B cell (primary cell): ENCODE measurements at regions of chr19 and their contacts with region 1.

Region 1: DNA sequence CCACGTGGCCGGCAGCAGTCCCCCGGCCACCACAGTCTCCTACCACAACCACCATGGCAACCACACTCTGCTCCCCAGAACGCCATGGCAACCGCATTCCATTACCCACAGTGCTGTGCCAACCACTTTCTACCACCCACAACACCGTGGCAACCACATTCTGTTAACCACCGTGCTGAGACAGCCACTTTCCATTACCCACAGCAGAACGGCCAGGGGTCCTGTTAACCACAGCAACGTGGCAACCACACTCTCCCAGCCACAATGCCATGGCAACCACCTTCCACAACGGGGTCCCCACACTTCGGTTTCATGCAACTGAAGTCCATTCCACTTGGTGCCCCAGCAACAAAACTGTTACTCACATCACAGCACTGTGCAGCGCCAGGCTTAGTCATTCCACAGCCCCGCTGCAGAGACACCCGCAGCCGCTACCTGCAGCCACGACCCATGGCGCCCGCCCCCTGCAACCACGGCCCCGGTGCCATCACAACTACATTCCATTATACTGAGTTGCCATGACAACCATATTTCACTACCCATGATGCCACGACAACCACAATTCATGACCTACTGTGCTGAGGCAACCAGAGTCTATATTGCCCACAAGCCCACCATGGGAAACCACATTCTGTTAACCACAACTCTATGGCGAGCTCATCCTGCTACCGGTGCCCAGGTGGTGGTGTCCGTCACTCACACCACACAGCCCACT is 10.0 kb downstream of the DPF1 start:
- DNase-seq: peak; percentile 63
- ATAC-seq: peak; percentile 45
- H3K4me3 ChIP-seq: no peak overlapping the region
- H3K4me3 Mint-ChIP-seq: peak overlapping the region; percentile 38
- H3K27ac ChIP-seq: no peak overlapping the region
- H3K27ac Mint-ChIP-seq: peak overlapping the region; percentile 50
- H3K4me1 ChIP-seq: peaks cover 26 to 29% of the 10 kb centered on the region in 2 donors
- H3K4me1 Mint-ChIP-seq: peaks cover 31% of the 10 kb centered on the region
- H3K27me3 ChIP-seq: peaks cover 0 to 58% (median 16%) of the 10 kb centered on the region in 4 experiments
- H3K27me3 Mint-ChIP-seq: peaks cover 32% of the 10 kb centered on the region
- CTCF ChIP-seq: no peak

Region 2: GRCh38 chr19:39824143-39825092 is 1610.3 kb after region 1 on chr19:
- CTCF ChIA-PET with region 1: no interaction called
- POLR2A ChIA-PET with region 1: interaction called, 16 read pairs
- intact Hi-C with region 1: no loop called
- DNase-seq: peak; percentile 92
- ATAC-seq: peak; percentile 98
- H3K4me3 ChIP-seq: peak overlapping the region; percentile 66 to 85 (median 79)
- H3K4me3 Mint-ChIP-seq: no peak overlapping the region
- H3K27ac ChIP-seq: peak overlapping the region; percentile 38 to 55
- H3K27ac Mint-ChIP-seq: no peak overlapping the region
- H3K4me1 ChIP-seq: peaks cover 18 to 30% of the 10 kb centered on the region in 2 donors
- H3K4me1 Mint-ChIP-seq: peaks cover 13% of the 10 kb centered on the region
- H3K27me3 ChIP-seq: no peaks in the 10 kb centered on the region
- H3K27me3 Mint-ChIP-seq: no peaks in the 10 kb centered on the region
- CTCF ChIP-seq: no peak